PC-3 (cell line): ENCODE measurements at regions of chr6 and their contacts with region 1.

Region 1: DNA sequence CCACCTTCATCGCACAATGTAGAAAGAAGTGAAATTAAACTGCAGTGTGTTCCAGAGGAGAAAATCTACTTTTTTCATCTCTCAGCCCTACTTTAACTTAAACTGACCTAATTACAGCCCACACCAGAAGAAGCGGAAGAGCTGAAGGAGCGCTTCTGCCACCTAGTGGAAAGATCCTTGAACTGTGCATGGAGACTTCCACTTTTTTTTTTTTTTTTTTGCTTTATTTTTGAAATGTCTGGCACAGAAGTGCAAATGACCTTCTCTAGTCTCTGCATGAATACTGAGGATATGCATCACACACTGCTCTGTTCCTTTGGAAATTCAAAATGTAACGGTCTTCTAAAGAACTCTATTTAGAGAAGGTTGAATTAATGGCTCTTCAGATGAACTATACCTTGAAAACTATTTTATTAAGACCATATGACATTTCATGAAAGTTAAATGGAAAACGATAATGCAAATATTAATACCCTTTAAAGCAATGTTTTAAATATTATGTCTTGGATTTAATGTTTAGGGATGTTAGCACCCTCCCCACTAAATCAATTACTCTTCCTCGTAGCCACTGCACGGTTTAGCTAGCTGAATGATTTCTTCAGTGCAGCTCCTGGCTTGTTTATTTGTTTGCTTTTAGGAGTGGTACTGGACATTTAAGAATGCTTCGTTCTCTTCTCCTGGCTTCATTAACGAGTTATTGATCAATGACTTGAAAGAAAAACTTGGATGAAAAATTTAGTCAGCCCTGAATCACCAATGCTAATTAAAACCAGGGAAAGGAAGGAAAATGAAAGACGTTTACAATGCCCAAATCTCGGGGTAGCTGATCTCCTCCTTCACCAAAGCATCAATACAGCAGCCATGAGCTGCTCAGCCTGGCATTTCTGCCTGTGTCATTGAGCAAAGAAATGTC is 569.6 kb upstream of the GJE1 start:
- DNase-seq: peak; percentile 85
- ATAC-seq: peak; percentile 69
- H3K4me3 ChIP-seq: peak overlapping the region; percentile 46
- H3K27ac ChIP-seq: peak overlapping the region; percentile 96
- H3K4me1 ChIP-seq: peaks cover 28% of the 10 kb centered on the region
- H3K27me3 ChIP-seq: no peaks in the 10 kb centered on the region
- CTCF ChIP-seq: peak; percentile 79

Region 2: DNA sequence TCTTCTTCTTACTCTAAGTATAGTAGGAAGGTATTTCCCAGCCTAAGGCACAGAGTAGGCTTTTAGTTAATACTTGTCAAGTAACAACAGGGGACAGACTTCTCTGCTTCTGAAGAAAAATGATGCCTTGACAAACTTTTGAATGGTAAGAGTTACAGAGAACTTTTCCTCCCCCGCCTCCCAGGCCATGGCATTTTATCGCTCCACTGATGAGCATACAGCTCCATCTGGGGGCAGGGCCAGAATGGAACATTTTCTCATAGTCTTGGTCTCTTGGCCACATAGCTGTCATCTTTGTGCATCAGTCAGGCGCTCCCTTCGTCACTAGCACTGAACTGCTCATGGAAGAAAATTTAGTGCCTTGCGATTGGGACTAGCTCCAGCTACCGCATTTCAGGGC is 1121.9 kb before region 1 on chr6:
- CTCF ChIA-PET with region 1: no interaction called
- POLR2A ChIA-PET with region 1: no interaction called
- intact Hi-C with region 1: loop called (anchors 5 kb)
- DNase-seq: peak; percentile 58
- ATAC-seq: peak; percentile 42; the same call in 1 of the 2 replicates
- H3K4me3 ChIP-seq: no peak overlapping the region
- H3K27ac ChIP-seq: no peak overlapping the region
- H3K4me1 ChIP-seq: peaks cover 9% of the 10 kb centered on the region
- H3K27me3 ChIP-seq: no peaks in the 10 kb centered on the region
- CTCF ChIP-seq: peak; percentile 59; the same call in 1 of the 2 replicates

Region 3: GRCh38 chr6:140857739-140858380 is 705.2 kb before region 1 on chr6:
- CTCF ChIA-PET with region 1: no interaction called
- POLR2A ChIA-PET with region 1: no interaction called
- intact Hi-C with region 1: loop called (anchors 5 kb)
- DNase-seq: peak; percentile 63
- ATAC-seq: peak; percentile 89
- H3K4me3 ChIP-seq: peak overlapping the region; percentile 56
- H3K27ac ChIP-seq: peak overlapping the region; percentile 83
- H3K4me1 ChIP-seq: peaks cover 27% of the 10 kb centered on the region
- H3K27me3 ChIP-seq: no peaks in the 10 kb centered on the region
- CTCF ChIP-seq: no peak

Region 4: DNA sequence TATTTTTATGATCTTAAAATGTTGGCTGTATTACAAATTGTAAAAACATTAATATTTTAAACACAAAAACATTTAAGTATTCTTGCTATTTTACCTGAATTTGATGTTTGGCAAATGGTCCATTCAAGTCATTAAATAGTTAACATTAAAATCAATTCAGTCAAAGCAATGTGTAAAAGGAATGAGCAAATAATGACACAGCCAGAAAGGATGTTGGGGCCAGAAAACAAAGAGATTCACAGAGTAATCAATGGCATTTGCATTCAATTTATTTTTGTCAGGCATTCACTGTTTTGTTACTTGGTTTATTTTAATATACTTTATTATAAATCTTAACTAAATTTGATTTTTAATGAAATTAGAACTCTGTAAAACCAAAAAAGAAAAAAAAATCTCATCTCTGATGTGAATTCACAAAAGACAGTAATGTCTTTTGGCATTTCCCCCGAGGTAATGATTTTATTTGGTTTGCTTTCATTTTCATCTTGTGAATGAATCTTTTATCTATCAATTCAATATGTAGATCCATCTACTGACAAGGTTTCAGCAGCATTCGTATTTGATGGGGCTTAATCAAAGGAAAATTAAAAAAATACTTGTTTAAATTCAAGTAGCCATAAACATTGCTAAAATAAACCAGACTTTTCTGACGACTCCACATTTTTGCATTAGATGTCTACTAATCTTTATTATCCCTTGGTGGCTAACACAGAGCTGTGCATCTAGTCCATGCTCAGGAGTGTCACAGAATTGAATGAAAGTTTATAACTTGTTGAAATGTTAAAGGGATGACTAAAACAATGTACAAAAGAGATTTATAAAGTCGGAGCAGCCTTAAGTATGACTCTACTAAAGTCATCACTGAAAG is 297.1 kb before region 1 on chr6:
- CTCF ChIA-PET with region 1: no interaction called
- POLR2A ChIA-PET with region 1: no interaction called
- intact Hi-C with region 1: loop called (anchors 5 kb)
- DNase-seq: peak; percentile 52
- ATAC-seq: 0 out of 2 replicates have a peak, but pooled peaks have one; percentile 54
- H3K4me3 ChIP-seq: peak overlapping the region; percentile 66
- H3K27ac ChIP-seq: peak overlapping the region; percentile 39
- H3K4me1 ChIP-seq: peaks cover 28% of the 10 kb centered on the region
- H3K27me3 ChIP-seq: no peaks in the 10 kb centered on the region
- CTCF ChIP-seq: no peak

Region 5: DNA sequence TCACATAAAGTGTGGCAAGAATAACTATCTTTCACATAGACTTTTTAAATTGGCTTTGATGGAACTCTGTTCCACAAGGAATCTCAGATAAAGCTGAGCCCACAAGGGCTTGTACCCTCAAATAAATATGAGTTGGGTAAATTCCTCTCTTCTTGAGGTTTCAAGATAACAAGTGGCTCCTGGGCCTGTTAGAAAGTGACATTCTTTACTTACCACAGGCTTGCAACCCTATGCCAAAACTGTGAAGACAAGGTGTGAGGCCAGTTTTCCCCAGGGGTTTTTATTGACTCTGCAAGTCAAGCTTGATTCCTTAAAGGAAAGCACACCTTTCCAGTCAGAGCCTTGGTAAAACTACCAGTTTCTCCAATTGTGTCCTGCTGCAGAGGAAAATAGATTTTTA is 95.2 kb before region 1 on chr6:
- CTCF ChIA-PET with region 1: interaction called, 6 read pairs
- POLR2A ChIA-PET with region 1: no interaction called
- intact Hi-C with region 1: loop called (anchors 1 kb)
- DNase-seq: peak; percentile 67
- ATAC-seq: peak; percentile 78
- H3K4me3 ChIP-seq: no peak overlapping the region
- H3K27ac ChIP-seq: peak overlapping the region; percentile 1; the same call in 1 of the 2 replicates
- H3K4me1 ChIP-seq: peaks cover 34% of the 10 kb centered on the region
- H3K27me3 ChIP-seq: no peaks in the 10 kb centered on the region
- CTCF ChIP-seq: no peak

Region 6: DNA sequence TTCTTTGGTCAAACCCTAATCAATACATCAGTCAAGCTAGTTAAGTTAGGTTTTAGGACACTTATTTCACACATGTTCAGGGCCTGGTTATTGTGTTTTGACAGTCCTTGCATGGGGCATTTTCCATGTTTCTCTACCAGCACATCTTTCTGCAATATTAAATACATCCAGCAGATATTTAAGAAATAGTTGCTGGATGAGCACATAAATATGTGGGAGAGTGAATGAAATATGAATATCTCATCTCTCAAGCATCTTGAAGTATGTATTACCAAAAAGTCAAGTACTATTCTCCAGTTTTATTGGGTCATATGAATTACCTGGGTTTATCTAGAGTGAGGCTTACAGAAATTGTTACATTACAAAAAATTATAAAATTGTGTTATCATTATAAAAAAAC is 52.3 kb before region 1 on chr6:
- CTCF ChIA-PET with region 1: no interaction called
- POLR2A ChIA-PET with region 1: no interaction called
- intact Hi-C with region 1: no loop called
- DNase-seq: no peak
- ATAC-seq: no peak
- H3K4me3 ChIP-seq: no peak overlapping the region
- H3K27ac ChIP-seq: no peak overlapping the region
- H3K4me1 ChIP-seq: no peaks in the 10 kb centered on the region
- H3K27me3 ChIP-seq: no peaks in the 10 kb centered on the region
- CTCF ChIP-seq: no peak